ENCODE measurements at regions of chr16 and their contacts with region 1.

Region 1: GRCh38 chr16:30005341-30006094 is 5.3 kb downstream of the DOC2A start:
- DNase-seq: no peak
- H3K4me3 ChIP-seq: no peak overlapping the region
- H3K27ac ChIP-seq: no peak overlapping the region
- H3K4me1 ChIP-seq: peaks cover 0 to 22% (median 11%) of the 10 kb centered on the region in 4 experiments; a peak in 6 of 7 replicates
- H3K27me3 ChIP-seq: peaks cover 0 to 13% (median 8%) of the 10 kb centered on the region in 4 experiments; a peak in 4 of 7 replicates
- CTCF ChIP-seq: peak in 2 of 3 experiments; percentile 60 to 71; a peak in 3 of 4 replicates
- EP300 ChIP-seq: no peak
- POLR2A ChIP-seq: no peak
- RAD21 ChIP-seq: peak; percentile 29 to 50; a peak in 3 of 4 replicates

Region 2: GRCh38 chr16:29951625-29952365 is 53.7 kb before region 1 on chr16:
- CTCF ChIA-PET with region 1: no interaction called
- POLR2A ChIA-PET with region 1: no interaction called
- DNase-seq: peak in 1 of 2 experiments; percentile 52
- H3K4me3 ChIP-seq: no peak overlapping the region
- H3K27ac ChIP-seq: no peak overlapping the region
- H3K4me1 ChIP-seq: peaks cover 0 to 7% (median 4%) of the 10 kb centered on the region in 4 experiments; a peak in 5 of 7 replicates
- H3K27me3 ChIP-seq: no peaks in the 10 kb centered on the region
- CTCF ChIP-seq: peak; percentile 25 to 61 (median 35); a peak in 3 of 4 replicates
- EP300 ChIP-seq: no peak
- POLR2A ChIP-seq: no peak
- RAD21 ChIP-seq: no peak; a peak in 1 of 4 replicates

Region 3: DNA sequence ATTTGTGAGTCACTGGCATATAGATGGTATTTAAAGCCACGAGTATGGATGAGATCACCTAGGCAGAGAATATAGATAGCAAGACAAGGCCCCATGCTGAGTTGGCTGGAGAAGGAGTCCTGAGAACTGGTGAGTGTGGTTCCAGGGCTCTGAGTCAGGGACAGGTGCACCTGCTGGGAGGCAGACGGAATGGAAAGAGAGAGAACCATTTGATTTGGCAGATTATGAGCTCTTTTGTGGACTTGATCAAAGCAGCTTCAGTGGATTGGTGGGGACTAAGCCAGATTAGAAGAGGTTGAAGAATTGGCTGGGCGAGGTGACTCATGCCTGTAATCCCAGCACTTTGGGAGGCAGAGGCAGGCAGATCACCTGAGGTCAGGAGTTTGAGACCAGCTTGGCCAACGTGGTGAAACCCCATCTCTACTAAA is 13.2 kb after region 1 on chr16:
- CTCF ChIA-PET with region 1: interaction called, 9 read pairs
- POLR2A ChIA-PET with region 1: interaction called, 11 read pairs
- DNase-seq: no peak
- H3K4me3 ChIP-seq: no peak overlapping the region
- H3K27ac ChIP-seq: no peak overlapping the region
- H3K4me1 ChIP-seq: no peaks in the 10 kb centered on the region; a peak in 1 of 7 replicates
- H3K27me3 ChIP-seq: no peaks in the 10 kb centered on the region
- CTCF ChIP-seq: no peak
- EP300 ChIP-seq: no peak
- POLR2A ChIP-seq: no peak
- RAD21 ChIP-seq: no peak

Measured in H1 (cell line).